Naive thymus-derived CD4-positive, alpha-beta T cell (primary cell): ENCODE measurements at regions of chr22 and their contacts with region 1.

Region 1: DNA sequence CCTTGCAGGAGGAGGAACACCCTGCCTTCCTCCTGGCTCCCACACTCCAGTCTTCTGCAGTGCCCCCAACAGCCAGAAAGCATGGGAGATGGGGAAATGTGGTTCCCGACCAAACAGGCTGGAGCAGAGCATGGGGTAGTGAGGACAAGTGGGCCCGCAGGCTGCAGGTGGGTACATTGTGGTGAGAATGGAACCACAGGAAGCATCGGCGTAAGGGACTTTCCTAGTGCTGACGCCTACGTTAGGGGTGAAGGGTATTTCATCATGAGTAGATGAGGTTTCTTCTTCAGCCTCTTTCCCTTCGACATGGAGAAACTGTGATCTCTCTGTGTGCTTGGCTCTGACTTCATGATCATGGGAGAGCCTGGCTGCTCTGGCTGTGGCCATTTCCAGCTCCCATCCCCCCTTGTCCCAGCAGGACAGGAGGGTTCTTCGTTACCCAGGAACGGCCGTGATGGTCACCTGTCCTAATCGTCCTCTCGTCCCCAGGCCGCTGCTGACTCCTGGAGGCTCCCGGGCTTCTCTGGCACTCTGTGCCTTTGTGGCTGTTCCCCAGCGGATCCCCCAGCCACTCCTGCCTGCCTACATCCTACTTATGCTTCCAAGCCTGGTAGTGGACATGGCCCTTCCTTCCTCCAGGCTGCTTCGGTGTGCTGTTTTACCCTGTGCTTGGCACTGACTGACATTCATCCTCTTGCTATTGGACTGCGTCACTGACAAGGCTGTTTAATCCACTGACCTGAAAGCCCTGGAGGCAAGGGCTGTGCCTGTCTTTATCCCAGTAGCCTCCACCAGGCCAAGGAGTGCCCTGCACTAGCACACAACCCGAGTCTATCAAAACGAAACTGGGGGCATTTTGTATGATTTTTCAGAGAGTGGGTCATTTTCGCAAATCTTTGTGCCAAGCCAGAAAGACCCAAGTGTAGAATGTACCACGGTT is 65.2 kb upstream of the CECR2 start:
- DNase-seq: peak; percentile 9 to 78 (median 56)
- ATAC-seq: peak; percentile 97
- H3K4me3 ChIP-seq: peak overlapping the region; percentile 27
- H3K4me3 Mint-ChIP-seq: peak overlapping the region; percentile 7 to 86 (median 58)
- H3K27ac ChIP-seq: peak overlapping the region; percentile 51
- H3K27ac Mint-ChIP-seq: peak overlapping the region; percentile 36 to 95 (median 87)
- H3K4me1 ChIP-seq: peaks cover 12 to 14% of the 10 kb centered on the region in 2 donors
- H3K4me1 Mint-ChIP-seq: peaks cover 6 to 46% (median 28%) of the 10 kb centered on the region in 7 donors
- H3K27me3 ChIP-seq: no peaks in the 10 kb centered on the region
- H3K27me3 Mint-ChIP-seq: peaks cover 0 to 2% (median 0%) of the 10 kb centered on the region in 5 donors

Region 2: GRCh38 chr22:17258015-17258787 is 45.9 kb before region 1 on chr22:
- CTCF ChIA-PET with region 1: no interaction called
- POLR2A ChIA-PET with region 1: no interaction called
- intact Hi-C with region 1: loop called in 1 of 2 experiments (anchors 2 kb)
- DNase-seq: peak in 8 of 9 donors; percentile 37 to 65 (median 52)
- ATAC-seq: peak; percentile 82
- H3K4me3 ChIP-seq: peak overlapping the region; percentile 38
- H3K4me3 Mint-ChIP-seq: peak overlapping the region; percentile 23 to 82 (median 67)
- H3K27ac ChIP-seq: peak overlapping the region; percentile 41
- H3K27ac Mint-ChIP-seq: peak overlapping the region; percentile 59 to 93 (median 89)
- H3K4me1 ChIP-seq: peaks cover 0 to 20% of the 10 kb centered on the region in 2 donors
- H3K4me1 Mint-ChIP-seq: peaks cover 13 to 36% (median 26%) of the 10 kb centered on the region in 7 donors
- H3K27me3 ChIP-seq: no peaks in the 10 kb centered on the region
- H3K27me3 Mint-ChIP-seq: no peaks in the 10 kb centered on the region